Mammary epithelial cell (primary cell): ENCODE measurements at regions of chr17 and their contacts with region 1.

Region 1: GRCh38 chr17:74659898-74660297 is 36.4 kb upstream of the CD300E start:
- DNase-seq: no peak
- H3K4me3 ChIP-seq: no peak overlapping the region
- H3K27ac ChIP-seq: no peak overlapping the region
- H3K4me1 ChIP-seq: no peaks in the 10 kb centered on the region
- H3K27me3 ChIP-seq: no peaks in the 10 kb centered on the region
- CTCF ChIP-seq: no peak

Region 2: GRCh38 chr17:74712756-74713155 is 52.9 kb after region 1 on chr17 and contains the start of gene CD300LF:
- CTCF ChIA-PET with region 1: no interaction called
- dilution Hi-C with region 1: no loop called
- in situ Hi-C with region 1: no loop called
- intact Hi-C with region 1: no loop called
- DNase-seq: no peak
- H3K4me3 ChIP-seq: no peak within 1 kb of the TSS
- H3K27ac ChIP-seq: no peak within 1 kb of the TSS
- H3K4me1 ChIP-seq: no peaks in the 10 kb centered on the region
- H3K27me3 ChIP-seq: no peaks in the 10 kb centered on the region
- CTCF ChIP-seq: no peak
- total RNA-seq, gene CD300LF: not detected

Region 3: DNA sequence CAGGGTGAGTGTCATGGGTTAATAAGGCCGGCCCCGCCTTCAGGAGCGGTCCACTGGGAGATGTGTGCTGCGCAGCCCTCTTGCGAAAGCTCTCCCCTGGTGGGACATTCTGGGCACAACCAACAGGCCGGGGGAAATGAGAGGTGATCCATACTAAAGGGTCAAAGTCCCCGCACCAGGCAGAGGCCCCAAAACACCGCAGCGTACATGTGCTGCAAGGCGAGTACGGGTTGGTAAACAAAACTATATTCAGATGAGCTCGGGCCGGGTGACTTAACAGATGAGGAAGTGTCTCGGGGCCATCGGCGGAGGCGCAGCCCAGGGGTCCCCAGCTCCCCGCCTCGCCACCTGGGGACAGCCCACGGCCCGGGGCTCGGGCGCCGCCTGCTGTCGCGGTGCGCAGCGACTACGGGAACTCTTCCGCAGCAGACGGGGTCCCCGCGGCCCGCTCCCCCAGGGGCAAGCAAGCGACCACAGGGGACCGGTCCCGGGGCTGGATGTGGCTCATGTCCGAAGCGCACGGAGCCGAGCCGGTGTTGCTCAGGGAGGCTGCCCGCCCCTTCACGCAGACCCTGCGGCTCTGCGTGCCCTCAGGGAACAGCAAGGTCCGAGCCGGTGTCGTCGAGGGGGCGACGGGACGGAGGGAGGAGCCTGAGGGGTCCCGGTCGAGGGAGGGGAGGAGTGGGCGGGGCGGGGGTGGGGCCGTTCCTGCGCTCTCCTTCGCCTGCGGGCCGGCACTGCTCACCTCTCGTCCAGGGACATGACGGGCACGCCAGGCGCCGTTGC is 76.8 kb after region 1 on chr17 and contains the start of gene RAB37:
- CTCF ChIA-PET with region 1: interaction called, 6 read pairs
- dilution Hi-C with region 1: no loop called
- in situ Hi-C with region 1: no loop called
- intact Hi-C with region 1: loop called (anchors 1 kb)
- DNase-seq: no peak
- H3K4me3 ChIP-seq: no peak within 1 kb of the TSS
- H3K27ac ChIP-seq: no peak within 1 kb of the TSS
- H3K4me1 ChIP-seq: peaks cover 4% of the 10 kb centered on the region
- H3K27me3 ChIP-seq: peaks cover 27% of the 10 kb centered on the region
- CTCF ChIP-seq: peak in 1 of 2 donors; percentile 42
- total RNA-seq, gene RAB37: not detected

Region 4: GRCh38 chr17:74770498-74771318 is 110.8 kb after region 1 on chr17:
- CTCF ChIA-PET with region 1: no interaction called
- dilution Hi-C with region 1: no loop called
- in situ Hi-C with region 1: no loop called
- intact Hi-C with region 1: loop called (anchors 1 kb)
- DNase-seq: peak; percentile 51
- H3K4me3 ChIP-seq: no peak overlapping the region
- H3K27ac ChIP-seq: no peak overlapping the region
- H3K4me1 ChIP-seq: peaks cover 11% of the 10 kb centered on the region
- H3K27me3 ChIP-seq: no peaks in the 10 kb centered on the region
- CTCF ChIP-seq: peak; percentile 88 to 95

Region 5: DNA sequence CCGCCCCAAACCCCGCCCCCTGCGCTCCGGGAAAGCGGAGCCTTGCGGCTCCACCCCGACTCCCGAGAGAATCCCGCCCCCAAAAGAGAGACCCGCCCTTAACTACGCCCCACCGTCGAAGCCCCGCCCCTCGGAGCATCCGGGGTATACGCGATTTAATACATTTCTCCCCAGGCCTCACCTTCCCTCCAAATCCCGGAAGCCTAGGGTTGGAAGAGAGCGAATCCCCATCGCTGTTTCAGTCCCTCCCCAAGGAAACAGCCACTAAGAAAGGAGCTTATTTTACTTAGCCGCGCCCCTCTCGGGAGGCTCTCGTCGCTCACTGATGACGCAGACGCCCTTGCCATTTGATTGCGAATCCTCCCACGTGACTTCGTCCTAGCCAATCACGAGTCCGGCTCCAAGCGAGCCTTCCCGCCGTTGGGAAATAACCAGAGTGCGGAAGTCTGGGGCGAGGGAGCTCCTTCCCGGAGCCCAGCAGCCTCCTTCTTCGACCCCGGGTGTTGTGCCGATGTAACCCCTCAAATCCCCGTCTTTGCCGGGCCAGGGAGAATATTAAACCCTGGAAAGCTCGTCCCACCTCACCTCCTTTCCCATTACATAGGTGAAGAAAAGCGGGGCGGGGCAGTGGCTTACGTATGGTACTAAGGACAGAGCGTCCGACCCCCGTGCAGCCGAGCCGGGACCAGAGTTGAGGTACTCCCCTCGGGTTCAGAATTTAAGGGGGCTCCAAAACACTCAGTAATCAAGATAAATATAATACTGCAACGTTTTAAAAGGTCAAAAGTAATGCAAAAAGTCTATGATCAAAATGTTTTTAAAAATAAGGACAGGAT is 213.4 kb after region 1 on chr17:
- CTCF ChIA-PET with region 1: interaction called, 11 read pairs
- dilution Hi-C with region 1: no loop called
- in situ Hi-C with region 1: no loop called
- intact Hi-C with region 1: no loop called
- DNase-seq: peak; percentile 100
- H3K4me3 ChIP-seq: peak overlapping the region; percentile 85 to 97 (median 90)
- H3K27ac ChIP-seq: peak overlapping the region; percentile 96
- H3K4me1 ChIP-seq: peaks cover 21% of the 10 kb centered on the region
- H3K27me3 ChIP-seq: no peaks in the 10 kb centered on the region
- CTCF ChIP-seq: no peak